ENCODE measurements at regions of chr20 and their contacts with region 1.

Region 1: DNA sequence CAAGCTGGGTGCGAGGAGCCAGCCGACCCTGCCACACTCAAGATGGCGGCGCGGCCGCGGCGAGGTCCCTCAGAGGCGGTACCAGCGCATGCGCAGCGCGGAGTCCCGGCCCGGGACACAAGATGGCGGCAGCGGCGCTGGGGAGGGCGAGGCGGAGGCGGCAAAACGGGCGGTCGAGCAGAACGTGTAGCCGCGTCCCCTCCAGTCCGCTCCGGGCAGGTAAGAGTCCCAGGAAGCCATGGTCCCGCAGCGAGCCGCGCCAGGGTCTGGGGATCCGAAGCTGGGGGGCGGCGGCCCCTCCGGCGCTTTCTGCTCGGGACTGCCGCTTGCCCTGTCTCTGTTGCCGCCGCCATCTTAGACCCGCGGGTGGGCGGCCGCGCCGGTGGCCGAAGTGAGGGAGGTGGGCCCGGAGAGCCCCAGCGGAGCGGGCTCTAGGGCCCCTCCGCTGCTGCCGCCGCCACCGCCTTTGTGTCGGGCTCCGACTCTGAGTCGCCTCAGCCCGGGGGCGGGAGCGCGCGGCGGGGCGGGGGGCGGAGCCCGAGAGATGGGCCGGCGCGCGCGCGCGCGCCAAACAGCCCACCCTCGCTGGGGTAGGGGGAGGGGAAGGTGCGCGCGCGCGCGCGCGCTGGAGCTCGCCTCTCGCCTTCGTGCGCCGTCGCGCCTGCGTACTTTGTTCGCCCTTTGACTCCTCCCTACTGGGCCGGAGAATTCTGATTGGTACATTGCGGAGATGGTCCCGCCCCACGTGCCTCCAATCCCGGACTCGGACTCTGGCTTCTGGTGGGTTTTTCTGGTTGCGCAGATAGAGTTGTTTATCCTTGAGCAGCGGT is at the start of gene PCIF1:
- DNase-seq: peak; percentile 98
- ATAC-seq: peak; percentile 80
- H3K4me3 Mint-ChIP-seq: peak within 1 kb of the TSS; percentile 98
- H3K27ac Mint-ChIP-seq: peak within 1 kb of the TSS; percentile 98
- H3K4me1 Mint-ChIP-seq: peaks cover 18% of the 10 kb centered on the region
- H3K27me3 Mint-ChIP-seq: no peaks in the 10 kb centered on the region
- total RNA-seq, gene PCIF1: 54.5 to 58.3 TPM

Region 2: GRCh38 chr20:45812157-45813020 is 122.4 kb before region 1 on chr20 and contains the start of gene UBE2C:
- POLR2A ChIA-PET with region 1: interaction called, 25 read pairs
- DNase-seq: peak; percentile 92
- ATAC-seq: peak; percentile 100
- H3K4me3 Mint-ChIP-seq: peak within 1 kb of the TSS; percentile 92
- H3K27ac Mint-ChIP-seq: peak within 1 kb of the TSS; percentile 87
- H3K4me1 Mint-ChIP-seq: peaks cover 23% of the 10 kb centered on the region
- H3K27me3 Mint-ChIP-seq: no peaks in the 10 kb centered on the region
- total RNA-seq, gene UBE2C: 153 to 154 TPM

Region 3: GRCh38 chr20:45845452-45845851 is 89.3 kb before region 1 on chr20:
- POLR2A ChIA-PET with region 1: no interaction called
- DNase-seq: no peak
- ATAC-seq: no peak
- H3K4me3 Mint-ChIP-seq: no peak overlapping the region
- H3K27ac Mint-ChIP-seq: no peak overlapping the region
- H3K4me1 Mint-ChIP-seq: no peaks in the 10 kb centered on the region
- H3K27me3 Mint-ChIP-seq: no peaks in the 10 kb centered on the region

Region 4: GRCh38 chr20:45857114-45857881 is 77.5 kb before region 1 on chr20 and contains the starts of genes ACOT8 and ZSWIM3:
- POLR2A ChIA-PET with region 1: interaction called, 33 read pairs
- DNase-seq: peak; percentile 79
- ATAC-seq: peak; percentile 97
- H3K4me3 Mint-ChIP-seq: peak within 1 kb of the TSS; percentile 94
- H3K27ac Mint-ChIP-seq: peak within 1 kb of the TSS; percentile 99
- H3K4me1 Mint-ChIP-seq: peaks cover 29% of the 10 kb centered on the region
- H3K27me3 Mint-ChIP-seq: no peaks in the 10 kb centered on the region
- total RNA-seq, gene ACOT8: 35.4 to 38.6 TPM
- total RNA-seq, gene ZSWIM3: 5.3 to 5.7 TPM

Region 5: GRCh38 chr20:45872648-45873047 is 62.2 kb before region 1 on chr20:
- POLR2A ChIA-PET with region 1: no interaction called
- DNase-seq: no peak
- ATAC-seq: no peak
- H3K4me3 Mint-ChIP-seq: no peak overlapping the region
- H3K27ac Mint-ChIP-seq: no peak overlapping the region
- H3K4me1 Mint-ChIP-seq: no peaks in the 10 kb centered on the region
- H3K27me3 Mint-ChIP-seq: no peaks in the 10 kb centered on the region

Region 6: DNA sequence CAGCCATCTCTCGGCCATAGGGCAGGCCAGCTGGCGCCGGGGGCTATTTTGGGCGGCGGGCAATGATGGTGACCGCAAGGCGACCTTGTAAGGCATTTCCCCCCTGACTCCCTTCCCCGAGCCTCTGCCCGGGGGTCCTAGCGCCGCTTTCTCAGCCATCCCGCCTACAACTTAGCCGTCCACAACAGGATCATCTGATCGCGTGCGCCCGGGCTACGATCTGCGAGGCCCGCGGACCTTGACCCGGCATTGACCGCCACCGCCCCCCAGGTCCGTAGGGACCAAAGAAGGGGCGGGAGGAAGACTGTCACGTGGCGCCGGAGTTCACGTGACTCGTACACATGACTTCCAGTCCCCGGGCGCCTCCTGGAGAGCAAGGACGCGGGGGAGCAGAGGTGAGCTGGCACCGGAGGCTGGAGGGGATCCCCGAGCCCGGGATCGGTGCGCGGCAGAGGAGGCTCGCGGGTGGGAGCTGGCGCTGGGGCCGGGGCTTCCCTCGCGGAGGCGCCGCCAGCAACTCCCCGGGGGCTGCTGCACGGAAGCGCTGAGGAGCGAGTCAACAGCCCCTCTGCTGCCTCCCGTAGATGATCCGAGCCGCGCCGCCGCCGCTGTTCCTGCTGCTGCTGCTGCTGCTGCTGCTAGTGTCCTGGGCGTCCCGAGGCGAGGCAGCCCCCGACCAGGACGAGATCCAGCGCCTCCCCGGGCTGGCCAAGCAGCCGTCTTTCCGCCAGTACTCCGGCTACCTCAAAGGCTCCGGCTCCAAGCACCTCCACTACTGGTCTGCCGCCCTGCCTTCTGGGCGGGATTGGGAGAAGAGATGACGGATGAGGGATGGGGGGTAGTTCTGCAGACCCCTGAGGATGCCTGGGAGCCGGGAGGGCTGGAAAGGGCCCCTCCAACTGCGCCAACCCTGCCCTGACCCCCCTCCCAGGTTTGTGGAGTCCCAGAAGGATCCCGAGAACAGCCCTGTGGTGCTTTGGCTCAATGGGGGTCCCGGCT is 43.5 kb before region 1 on chr20 and contains the starts of genes CTSA and NEURL2:
- POLR2A ChIA-PET with region 1: interaction called, 43 read pairs
- DNase-seq: peak; percentile 88
- ATAC-seq: peak; percentile 73
- H3K4me3 Mint-ChIP-seq: peak within 1 kb of the TSS; percentile 92
- H3K27ac Mint-ChIP-seq: peak within 1 kb of the TSS; percentile 86
- H3K4me1 Mint-ChIP-seq: peaks cover 27% of the 10 kb centered on the region
- H3K27me3 Mint-ChIP-seq: no peaks in the 10 kb centered on the region
- total RNA-seq, gene CTSA: 76.9 to 83.4 TPM
- total RNA-seq, gene NEURL2: 3.9 to 5.3 TPM

Region 7: DNA sequence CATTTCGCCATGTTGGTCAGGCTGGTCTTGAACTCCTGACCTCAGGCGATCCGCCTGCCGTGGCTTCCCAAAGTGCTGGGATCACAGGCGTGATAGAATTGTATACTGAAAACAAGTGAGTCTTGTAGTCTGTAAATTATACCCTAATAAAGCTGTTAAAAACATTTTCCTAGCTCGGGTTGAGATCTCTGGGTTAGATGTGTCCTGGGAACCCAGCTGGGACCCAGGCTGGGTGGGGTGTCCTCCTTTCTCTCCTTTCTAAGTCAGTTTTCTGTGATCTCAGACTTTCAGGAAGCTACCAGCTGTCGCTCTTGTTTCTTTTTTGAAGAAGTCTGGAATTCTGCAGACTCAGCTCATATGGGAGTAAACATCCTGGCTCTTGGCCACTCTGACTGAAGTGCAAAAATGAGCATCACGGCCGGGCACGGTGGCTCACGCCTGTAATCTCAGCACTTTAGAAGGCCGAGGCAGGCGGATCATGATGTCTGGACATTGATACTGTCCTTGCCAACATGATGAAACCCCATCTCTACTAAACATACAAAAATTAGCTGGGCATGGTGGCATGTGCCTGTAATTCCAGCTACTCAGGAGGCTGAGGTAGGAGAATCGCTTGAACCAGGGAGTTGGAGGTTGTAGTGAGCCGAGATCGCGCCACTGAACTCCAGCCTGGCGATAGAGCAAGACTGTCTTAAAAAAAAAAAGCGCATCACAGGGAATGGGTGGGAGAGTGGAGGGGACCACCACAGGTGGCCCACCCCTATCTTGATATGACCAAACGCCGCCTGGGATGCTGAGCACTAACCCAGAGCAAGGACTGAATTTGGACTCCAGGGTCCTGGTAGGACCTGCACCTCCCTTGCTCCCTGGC is 10.2 kb before region 1 on chr20:
- POLR2A ChIA-PET with region 1: interaction called, 17 read pairs
- DNase-seq: no peak
- ATAC-seq: no peak
- H3K4me3 Mint-ChIP-seq: no peak overlapping the region
- H3K27ac Mint-ChIP-seq: no peak overlapping the region
- H3K4me1 Mint-ChIP-seq: no peaks in the 10 kb centered on the region
- H3K27me3 Mint-ChIP-seq: peaks cover 26% of the 10 kb centered on the region

Region 8: GRCh38 chr20:45963059-45964005 is 28.5 kb after region 1 on chr20:
- POLR2A ChIA-PET with region 1: interaction called, 93 read pairs
- DNase-seq: no peak
- ATAC-seq: no peak
- H3K4me3 Mint-ChIP-seq: no peak overlapping the region
- H3K27ac Mint-ChIP-seq: no peak overlapping the region
- H3K4me1 Mint-ChIP-seq: no peaks in the 10 kb centered on the region
- H3K27me3 Mint-ChIP-seq: no peaks in the 10 kb centered on the region

Region 9: GRCh38 chr20:46013826-46014516 is 79.2 kb after region 1 on chr20:
- POLR2A ChIA-PET with region 1: no interaction called
- DNase-seq: peak; percentile 85
- ATAC-seq: peak; percentile 88
- H3K4me3 Mint-ChIP-seq: peak overlapping the region; percentile 51
- H3K27ac Mint-ChIP-seq: no peak overlapping the region
- H3K4me1 Mint-ChIP-seq: peaks cover 34% of the 10 kb centered on the region
- H3K27me3 Mint-ChIP-seq: peaks cover 52% of the 10 kb centered on the region

Region 10: GRCh38 chr20:46027245-46027853 is 92.5 kb after region 1 on chr20:
- POLR2A ChIA-PET with region 1: no interaction called
- DNase-seq: no peak
- ATAC-seq: no peak
- H3K4me3 Mint-ChIP-seq: no peak overlapping the region
- H3K27ac Mint-ChIP-seq: no peak overlapping the region
- H3K4me1 Mint-ChIP-seq: peaks cover 9% of the 10 kb centered on the region
- H3K27me3 Mint-ChIP-seq: peaks cover 43% of the 10 kb centered on the region